Dendritic cell treated with granulocyte-macrophage colony-stimulating factor and Interleukin-4, amounts not matched to agents 40 ng/mL and 50 ng/mL, for 4 days (primary cell): ENCODE measurements at regions of chr13 and their contacts with region 1.

Region 1: DNA sequence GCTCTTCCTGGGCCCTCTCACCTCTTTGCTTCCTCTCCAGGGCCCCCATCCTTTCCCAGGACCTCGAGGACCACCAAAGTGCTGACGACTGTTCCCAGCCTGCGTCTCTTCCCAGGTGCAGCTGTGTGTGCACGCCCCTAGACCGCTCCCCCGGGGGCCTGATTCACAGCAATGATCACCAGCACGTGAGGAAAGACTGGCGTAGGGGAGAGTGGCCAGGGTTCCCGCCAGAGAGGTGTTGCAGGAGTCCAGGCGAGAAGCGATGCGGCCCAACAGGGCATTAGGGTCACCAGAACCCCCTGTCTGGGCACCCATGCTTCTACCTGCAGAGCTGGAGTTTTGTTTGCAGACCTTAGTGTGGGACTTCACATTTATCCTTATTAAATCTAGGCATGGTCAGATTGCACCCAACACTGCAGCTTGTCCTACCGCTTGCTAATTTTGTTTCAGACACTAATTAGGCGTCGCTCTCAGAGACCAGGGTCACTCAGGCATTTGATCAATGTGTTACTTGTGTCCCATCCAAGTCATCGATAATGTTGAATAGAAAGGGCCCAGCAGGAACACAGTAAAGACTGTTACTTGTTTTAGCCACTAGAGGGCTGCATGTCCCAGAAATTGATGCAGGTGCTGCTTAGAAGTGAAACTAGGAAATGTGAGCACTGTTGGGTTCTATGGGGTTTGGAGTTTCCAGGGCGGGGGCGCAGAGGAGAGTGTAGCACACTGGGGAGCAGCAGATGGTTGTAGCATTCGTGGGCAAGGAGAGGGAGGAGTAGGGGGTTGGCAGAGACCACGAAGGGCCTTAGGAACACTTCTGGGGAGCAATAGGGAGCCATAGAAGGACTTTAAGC is 53.2 kb downstream of the CDADC1 start:
- H3K4me3 Mint-ChIP-seq: peak overlapping the region; percentile 72
- H3K27ac Mint-ChIP-seq: peak overlapping the region; percentile 67
- H3K4me1 Mint-ChIP-seq: peaks cover 13% of the 10 kb centered on the region
- H3K27me3 Mint-ChIP-seq: no peaks in the 10 kb centered on the region

Region 2: GRCh38 chr13:49436890-49437289 is 135.9 kb after region 1 on chr13:
- intact Hi-C with region 1: loop called (anchors 1 kb)
- H3K4me3 Mint-ChIP-seq: no peak overlapping the region
- H3K27ac Mint-ChIP-seq: peak overlapping the region; percentile 43
- H3K4me1 Mint-ChIP-seq: peaks cover 12% of the 10 kb centered on the region
- H3K27me3 Mint-ChIP-seq: no peaks in the 10 kb centered on the region

Region 3: DNA sequence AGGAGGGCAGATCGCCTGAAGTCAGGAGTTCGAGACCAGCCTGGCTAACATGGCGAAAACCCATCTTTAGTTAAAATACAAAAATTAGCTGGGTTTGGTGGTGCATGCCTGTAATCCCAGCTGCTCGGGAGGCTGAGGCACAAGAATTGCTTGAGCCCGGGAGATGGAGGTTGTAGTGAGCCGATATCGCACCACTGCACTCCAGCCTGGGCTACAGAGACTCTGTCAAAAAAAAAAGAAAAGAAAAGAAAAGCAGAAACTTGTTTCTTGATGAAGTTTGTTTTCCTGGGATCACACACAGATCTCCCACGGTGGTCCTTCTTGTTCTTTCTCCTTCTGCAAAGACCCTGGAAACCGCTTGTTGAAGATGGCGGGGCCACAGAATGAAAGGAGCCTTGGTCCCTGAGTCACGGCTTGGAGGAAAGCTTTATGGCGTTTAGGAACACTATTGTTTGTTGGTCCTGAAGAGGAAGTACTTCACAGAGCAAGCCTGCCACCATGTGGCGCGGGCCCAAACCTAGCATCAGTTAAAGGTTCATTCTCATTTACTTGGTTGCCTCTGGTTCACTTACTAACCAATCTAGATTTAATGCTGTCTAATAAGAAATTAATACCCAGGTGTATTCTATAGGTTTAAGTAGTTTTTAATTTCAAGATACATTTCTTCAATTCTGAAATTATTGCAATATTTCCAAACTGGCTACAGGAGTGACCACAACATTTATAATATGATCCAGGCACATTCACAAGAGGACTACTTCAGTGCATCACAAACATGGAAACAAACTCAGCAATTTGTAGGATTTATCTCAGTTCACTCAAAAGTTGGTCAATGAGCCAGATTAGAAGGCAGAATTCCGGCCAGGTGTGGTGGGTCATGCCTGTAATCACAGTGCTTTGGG is 306.0 kb after region 1 on chr13:
- intact Hi-C with region 1: loop called (anchors 1 kb)
- H3K4me3 Mint-ChIP-seq: peak overlapping the region; percentile 64
- H3K27ac Mint-ChIP-seq: peak overlapping the region; percentile 66
- H3K4me1 Mint-ChIP-seq: peaks cover 13% of the 10 kb centered on the region
- H3K27me3 Mint-ChIP-seq: no peaks in the 10 kb centered on the region